Right lobe of liver (tissue), 6 donors: ENCODE measurements at regions of chr16 and their contacts with region 1.

Region 1: DNA sequence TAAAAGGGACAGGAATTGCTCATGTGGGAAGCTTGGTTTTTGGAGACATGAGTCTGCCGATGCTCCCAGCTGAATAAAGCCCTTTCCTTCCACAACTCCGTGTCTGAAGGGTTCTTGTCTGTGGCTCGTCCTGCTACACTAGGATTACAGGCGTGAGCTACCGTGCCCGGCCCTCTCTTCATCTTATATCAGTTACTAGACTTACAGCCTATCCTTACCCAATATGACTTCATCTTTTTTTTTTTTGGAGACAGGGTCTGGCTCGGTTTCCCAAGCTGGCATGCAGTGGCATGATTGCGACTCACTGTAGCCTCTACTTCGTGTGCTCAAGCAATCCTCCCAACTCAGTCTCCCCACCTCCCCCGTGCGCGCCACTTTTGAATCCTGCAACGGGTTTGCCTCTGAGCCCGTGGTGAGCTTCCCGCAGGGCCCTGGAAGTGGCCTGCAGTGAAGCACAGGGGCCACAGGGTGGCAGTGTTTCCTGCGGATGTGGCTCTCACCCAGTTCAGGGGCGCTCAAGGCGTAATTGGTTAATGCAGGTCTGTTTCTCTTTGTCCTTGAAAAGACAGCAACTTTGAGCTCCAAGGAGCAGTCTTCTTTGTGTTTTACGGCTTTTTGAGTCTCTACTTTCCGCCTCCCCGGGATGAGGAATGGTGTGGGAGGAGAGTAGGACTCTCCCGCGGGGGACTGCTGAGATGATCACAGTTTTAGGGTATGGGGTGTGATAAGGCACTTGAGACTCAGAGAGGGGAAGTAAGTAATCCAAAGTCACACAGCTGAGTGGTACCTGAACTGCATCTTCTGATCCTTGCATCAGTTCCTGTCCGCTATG is 22.7 kb upstream of the GPRC5B start:
- DNase-seq: peak; percentile 61 to 68 (median 63)
- ATAC-seq: peak; percentile 98 to 100 (median 98)
- H3K4me3 ChIP-seq: no peak overlapping the region
- H3K27ac ChIP-seq: no peak overlapping the region
- H3K4me1 ChIP-seq: no peaks in the 10 kb centered on the region
- H3K27me3 ChIP-seq: no peaks in the 10 kb centered on the region
- CTCF ChIP-seq: peak; percentile 95 to 97 (median 96)
- POLR2A ChIP-seq: no peak

Region 2: GRCh38 chr16:20291208-20292206 is 384.1 kb after region 1 on chr16:
- intact Hi-C with region 1: loop called in 1 of 2 experiments (anchors 10 kb)
- DNase-seq: no peak
- ATAC-seq: peak in 1 of 4 donors; percentile 19
- H3K4me3 ChIP-seq: no peak overlapping the region
- H3K27ac ChIP-seq: no peak overlapping the region
- H3K4me1 ChIP-seq: no peaks in the 10 kb centered on the region
- H3K27me3 ChIP-seq: no peaks in the 10 kb centered on the region
- CTCF ChIP-seq: no peak
- POLR2A ChIP-seq: no peak

Region 3: GRCh38 chr16:20300312-20301097 is 393.1 kb after region 1 on chr16:
- intact Hi-C with region 1: loop called (anchors 10 kb)
- DNase-seq: peak; percentile 42 to 66 (median 57)
- ATAC-seq: peak; percentile 98 to 99 (median 98)
- H3K4me3 ChIP-seq: no peak overlapping the region
- H3K27ac ChIP-seq: no peak overlapping the region
- H3K4me1 ChIP-seq: no peaks in the 10 kb centered on the region
- H3K27me3 ChIP-seq: no peaks in the 10 kb centered on the region
- CTCF ChIP-seq: peak; percentile 61 to 79 (median 77)
- POLR2A ChIP-seq: no peak

Region 4: GRCh38 chr16:20383106-20384029 is 476.0 kb after region 1 on chr16:
- intact Hi-C with region 1: loop called (anchors 10 kb)
- DNase-seq: peak; percentile 51 to 73 (median 65)
- ATAC-seq: peak; percentile 66 to 80 (median 72)
- H3K4me3 ChIP-seq: no peak overlapping the region
- H3K27ac ChIP-seq: no peak overlapping the region
- H3K4me1 ChIP-seq: peaks cover 0 to 15% (median 3%) of the 10 kb centered on the region in 4 donors
- H3K27me3 ChIP-seq: no peaks in the 10 kb centered on the region
- CTCF ChIP-seq: peak; percentile 72 to 90 (median 84)
- POLR2A ChIP-seq: no peak